ENCODE measurements at regions of chr12 and their contacts with region 1.

Region 1: DNA sequence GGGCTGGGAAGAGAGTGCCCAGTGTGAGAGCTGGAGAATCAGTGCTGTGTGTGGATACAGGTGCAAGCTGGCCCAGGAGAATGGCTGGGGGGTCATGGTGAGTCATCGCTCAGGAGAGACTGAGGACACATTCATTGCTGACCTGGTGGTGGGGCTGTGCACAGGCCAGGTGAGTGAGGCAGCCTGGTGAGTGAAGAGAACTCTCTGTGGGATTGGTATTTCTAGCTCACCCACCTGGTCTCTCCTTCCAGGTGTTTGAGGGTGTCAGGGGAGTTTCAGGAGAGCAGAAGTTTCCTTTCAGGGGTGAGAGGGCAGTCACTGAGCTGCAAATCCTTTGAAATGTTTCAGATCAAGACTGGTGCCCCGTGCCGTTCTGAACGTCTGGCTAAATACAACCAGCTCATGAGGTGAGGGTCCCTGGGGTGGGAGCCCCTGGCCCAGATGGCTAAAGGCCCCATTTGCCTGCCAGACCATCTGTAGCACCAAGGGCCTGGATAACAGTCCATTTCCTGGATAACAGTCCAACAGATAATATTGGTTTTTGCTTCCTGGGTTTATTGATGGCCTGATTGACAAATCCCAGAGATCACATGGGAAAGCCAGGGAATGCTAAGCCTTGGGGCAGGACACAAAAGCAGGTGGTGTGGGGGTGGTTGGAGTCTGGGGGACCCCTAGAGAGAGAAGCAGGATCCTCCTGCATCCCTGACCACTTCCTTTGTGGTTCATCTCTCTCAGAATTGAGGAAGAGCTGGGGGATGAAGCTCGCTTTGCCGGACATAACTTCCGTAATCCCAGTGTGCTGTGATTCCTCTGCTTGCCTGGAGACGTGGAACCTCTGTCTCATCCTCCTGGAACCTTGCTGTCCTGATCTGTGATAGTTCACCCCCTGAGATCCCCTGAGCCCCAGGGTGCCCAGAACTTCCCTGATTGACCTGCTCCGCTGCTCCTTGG is 5.5 kb upstream of the ATN1 start:
- DNase-seq: no peak
- ATAC-seq: no peak
- H3K4me3 ChIP-seq: no peak overlapping the region
- H3K27ac ChIP-seq: no peak overlapping the region
- H3K4me1 ChIP-seq: peaks cover 26% of the 10 kb centered on the region
- H3K27me3 ChIP-seq: no peaks in the 10 kb centered on the region
- CTCF ChIP-seq: no peak

Region 2: GRCh38 chr12:6267139-6267721 is 655.0 kb before region 1 on chr12:
- CTCF ChIA-PET with region 1: interaction called, 10 read pairs
- POLR2A ChIA-PET with region 1: no interaction called
- in situ Hi-C with region 1: no loop called
- intact Hi-C with region 1: no loop called
- DNase-seq: no peak
- ATAC-seq: no peak
- H3K4me3 ChIP-seq: no peak overlapping the region
- H3K27ac ChIP-seq: no peak overlapping the region
- H3K4me1 ChIP-seq: no peaks in the 10 kb centered on the region
- H3K27me3 ChIP-seq: no peaks in the 10 kb centered on the region
- CTCF ChIP-seq: no peak

Region 3: GRCh38 chr12:6996040-6996441 is 73.8 kb after region 1 on chr12:
- CTCF ChIA-PET with region 1: no interaction called
- POLR2A ChIA-PET with region 1: no interaction called
- in situ Hi-C with region 1: no loop called
- intact Hi-C with region 1: no loop called
- DNase-seq: no peak
- ATAC-seq: no peak
- H3K4me3 ChIP-seq: no peak overlapping the region
- H3K27ac ChIP-seq: no peak overlapping the region
- H3K4me1 ChIP-seq: no peaks in the 10 kb centered on the region
- H3K27me3 ChIP-seq: no peaks in the 10 kb centered on the region
- CTCF ChIP-seq: no peak